CD4-positive, alpha-beta T cell (primary cell): ENCODE measurements at regions of chr1 and their contacts with region 1.

Region 1: DNA sequence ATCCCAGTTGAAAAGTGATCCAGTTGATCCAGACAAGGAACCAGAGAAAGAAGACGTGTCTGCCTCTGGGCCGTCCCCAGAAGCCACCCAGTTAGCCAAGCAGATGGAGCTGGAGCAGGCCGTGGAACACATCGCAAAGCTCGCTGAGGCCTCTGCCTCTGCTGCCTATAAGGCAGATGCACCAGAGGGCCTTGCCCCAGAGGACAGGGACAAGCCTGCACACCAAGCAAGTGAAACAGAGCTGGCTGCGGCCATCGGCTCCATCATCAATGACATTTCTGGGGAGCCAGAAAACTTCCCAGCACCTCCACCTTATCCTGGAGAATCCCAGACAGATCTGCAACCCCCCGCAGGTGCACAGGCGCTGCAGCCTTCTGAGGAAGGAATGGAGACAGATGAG is 43.3 kb downstream of the ZBTB17 start:
- DNase-seq: no peak
- ATAC-seq: no peak
- H3K4me3 ChIP-seq: no peak overlapping the region
- H3K4me3 Mint-ChIP-seq: no peak overlapping the region
- H3K27ac ChIP-seq: no peak overlapping the region
- H3K27ac Mint-ChIP-seq: no peak overlapping the region
- H3K4me1 ChIP-seq: no peaks in the 10 kb centered on the region
- H3K4me1 Mint-ChIP-seq: no peaks in the 10 kb centered on the region
- H3K27me3 ChIP-seq: no peaks in the 10 kb centered on the region
- H3K27me3 Mint-ChIP-seq: no peaks in the 10 kb centered on the region
- CTCF ChIP-seq: no peak

Region 2: DNA sequence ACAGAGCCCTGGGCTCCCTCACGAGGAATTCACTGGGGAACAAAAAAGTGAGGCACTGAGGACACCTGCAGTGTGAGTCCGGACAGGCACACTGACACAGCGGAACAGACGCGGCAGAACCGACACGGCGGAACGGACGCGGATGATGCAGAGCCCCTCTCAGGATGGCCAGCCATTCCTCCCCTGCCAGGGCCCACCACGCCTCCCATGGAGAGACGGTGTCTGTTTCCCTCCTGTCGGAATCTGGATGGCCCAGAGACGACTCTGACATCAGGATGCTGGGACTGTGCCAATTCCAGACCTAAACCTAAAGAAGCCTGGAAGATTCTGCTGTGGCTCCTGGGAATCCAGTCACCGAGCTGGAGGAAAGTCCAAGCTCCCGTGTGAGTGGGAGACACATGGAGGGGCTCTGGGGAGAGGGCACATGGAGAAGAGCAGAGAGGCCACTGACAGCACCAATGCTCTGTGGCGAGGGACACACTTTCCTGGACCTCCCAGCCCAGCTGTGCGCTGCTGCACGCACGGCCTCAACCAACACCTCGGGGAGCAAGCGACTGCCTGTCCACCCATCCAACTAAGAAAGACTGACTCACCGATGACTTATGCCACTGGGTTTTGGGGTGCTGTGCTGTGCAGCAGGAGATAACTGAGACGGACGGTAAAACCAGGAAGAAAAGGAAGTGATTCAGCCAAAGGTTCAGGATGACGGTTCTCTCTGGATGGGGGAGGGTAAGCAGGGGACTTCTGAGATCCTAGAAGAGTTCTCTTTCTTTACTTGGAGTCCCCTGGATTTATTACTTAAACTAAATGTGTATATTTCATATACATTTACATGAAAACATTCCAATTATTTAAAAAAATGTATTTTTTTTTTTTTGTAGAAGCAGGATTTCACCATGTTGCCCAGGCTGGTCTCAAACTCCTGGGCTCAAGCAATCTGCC is 19.9 kb after region 1 on chr1:
- CTCF ChIA-PET with region 1: no interaction called
- POLR2A ChIA-PET with region 1: no interaction called
- intact Hi-C with region 1: loop called in 1 of 2 experiments (anchors 2 kb)
- DNase-seq: peak in 3 of 14 experiments; percentile 27 to 76 (median 65)
- ATAC-seq: no peak
- H3K4me3 ChIP-seq: no peak overlapping the region
- H3K4me3 Mint-ChIP-seq: no peak overlapping the region
- H3K27ac ChIP-seq: no peak overlapping the region
- H3K27ac Mint-ChIP-seq: peak overlapping the region; percentile 98
- H3K4me1 ChIP-seq: peaks cover 80% of the 10 kb centered on the region
- H3K4me1 Mint-ChIP-seq: peaks cover 86% of the 10 kb centered on the region
- H3K27me3 ChIP-seq: no peaks in the 10 kb centered on the region
- H3K27me3 Mint-ChIP-seq: no peaks in the 10 kb centered on the region
- CTCF ChIP-seq: no peak